ENCODE measurements at regions of chr3 and their contacts with region 1.

Region 1: DNA sequence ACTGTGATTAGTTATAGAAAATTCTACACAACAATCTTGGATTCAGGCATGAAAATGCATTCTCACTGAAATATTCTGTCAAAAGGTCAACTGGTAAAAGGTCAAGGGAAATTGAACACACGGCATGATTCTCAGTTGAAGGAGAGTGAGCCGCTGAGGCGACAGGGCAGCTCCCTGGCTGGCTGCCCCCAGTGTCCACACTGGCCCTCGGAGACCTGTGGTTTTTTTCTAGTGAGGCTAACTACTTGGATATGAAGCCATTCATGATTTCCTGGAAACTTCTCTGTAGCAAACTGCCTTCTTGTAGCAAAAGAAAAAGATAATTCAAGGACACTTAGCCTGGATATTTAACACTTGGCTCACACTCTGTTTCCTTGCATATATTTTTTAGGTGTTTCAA is 37.2 kb downstream of the AADACL2 start:
- DNase-seq: peak; percentile 88
- ATAC-seq: peak; percentile 88
- H3K4me3 ChIP-seq: peak overlapping the region; percentile 36 to 45 (median 45); a peak in 4 of 6 replicates
- H3K27ac ChIP-seq: peak overlapping the region; percentile 100
- H3K4me1 ChIP-seq: peaks cover 72% of the 10 kb centered on the region
- H3K27me3 ChIP-seq: no peaks in the 10 kb centered on the region
- CTCF ChIP-seq: peak; percentile 21; the same call in 1 of the 2 replicates
- EP300 ChIP-seq: peak; percentile 38 to 77; a peak in 3 of 4 replicates
- POLR2A ChIP-seq: peak; percentile 32 to 65; a peak in 3 of 4 replicates
- RAD21 ChIP-seq: peak; percentile 28; the same call in 1 of the 2 replicates

Region 2: DNA sequence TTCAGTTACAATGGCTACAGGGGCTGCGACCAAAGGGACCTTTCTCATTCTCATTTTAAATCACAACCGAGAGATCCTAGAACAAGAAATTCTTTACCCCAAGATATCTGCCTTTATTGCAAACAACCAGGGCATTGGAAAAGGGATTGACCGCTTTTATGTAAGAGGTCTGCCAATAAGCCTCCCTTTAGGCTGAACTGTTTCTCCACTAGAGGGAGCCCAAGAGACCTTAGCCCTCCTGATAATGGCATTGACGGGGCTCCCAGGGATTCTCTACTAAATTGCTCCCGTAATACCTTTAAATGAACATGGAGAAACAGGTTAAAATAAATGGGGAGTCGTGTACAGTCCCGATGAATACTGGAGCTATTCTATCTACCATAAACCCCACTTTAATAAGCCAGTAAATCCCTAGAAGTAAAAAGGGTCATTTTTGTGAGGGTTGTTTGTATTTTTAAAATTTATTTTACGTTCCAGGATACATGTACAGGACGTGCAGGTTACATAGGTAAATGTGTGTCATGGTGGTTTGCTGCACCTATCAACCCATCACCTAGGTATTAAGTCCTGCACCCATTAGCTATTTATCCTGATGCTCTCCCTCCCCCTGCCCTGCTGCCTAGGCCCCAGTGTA is 302.6 kb before region 1 on chr3:
- CTCF ChIA-PET with region 1: no interaction called
- POLR2A ChIA-PET with region 1: no interaction called
- in situ Hi-C with region 1: no loop called
- intact Hi-C with region 1: loop called (anchors 1 kb)
- DNase-seq: peak; percentile 63
- ATAC-seq: peak; percentile 95
- H3K4me3 ChIP-seq: no peak overlapping the region
- H3K27ac ChIP-seq: no peak overlapping the region
- H3K4me1 ChIP-seq: no peaks in the 10 kb centered on the region
- H3K27me3 ChIP-seq: peaks cover 0 to 4% of the 10 kb centered on the region in 2 experiments; a peak in 1 of 5 replicates
- CTCF ChIP-seq: peak; percentile 77
- EP300 ChIP-seq: no peak
- POLR2A ChIP-seq: no peak
- RAD21 ChIP-seq: 0 out of 2 replicates have a peak, but pooled peaks have one; percentile 28

Region 3: DNA sequence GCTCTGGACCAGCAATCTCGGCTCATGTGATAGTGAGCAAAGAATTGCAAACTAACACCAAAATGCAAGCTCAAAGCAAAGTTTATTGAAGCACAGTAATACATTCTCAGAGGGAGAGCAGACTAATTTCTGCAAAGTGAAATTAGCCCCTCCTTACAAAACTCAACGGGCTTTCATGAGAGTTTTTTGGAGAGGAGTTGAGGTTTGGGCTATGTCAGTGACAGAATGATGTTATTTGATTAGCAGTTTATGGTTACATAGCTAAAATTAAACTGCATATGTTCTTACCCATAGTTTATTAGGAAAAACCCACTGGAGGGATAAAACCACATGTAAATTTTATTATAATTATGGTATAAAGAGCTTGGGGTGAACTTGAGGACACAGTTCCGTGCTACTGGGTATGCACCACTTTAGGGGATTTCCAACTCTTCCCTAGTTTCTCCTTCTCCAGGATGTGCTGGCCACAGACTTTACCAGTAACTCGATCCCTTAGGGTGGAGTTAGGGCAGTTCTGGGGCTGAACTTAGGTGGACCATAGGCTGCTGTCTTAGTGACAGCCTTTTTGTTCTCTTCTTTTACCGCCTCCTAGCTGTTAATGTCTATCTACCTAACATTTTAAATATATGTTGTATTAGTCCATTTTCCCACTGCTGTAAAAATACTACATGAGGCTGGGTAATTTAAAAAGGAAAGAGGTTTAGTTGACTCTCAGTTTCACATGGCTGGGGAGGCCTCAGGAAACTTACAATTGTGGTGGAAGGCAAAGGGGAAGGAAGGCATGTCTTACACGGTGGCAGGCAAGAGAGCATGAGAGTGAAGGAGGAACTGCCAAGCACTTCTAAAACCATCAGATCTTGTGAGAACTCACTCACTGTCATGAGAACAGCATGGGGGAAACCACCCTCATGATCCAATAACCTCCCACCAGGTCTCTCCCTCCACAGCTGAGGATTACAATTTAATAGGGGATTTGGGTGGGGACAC is 46.1 kb before region 1 on chr3:
- CTCF ChIA-PET with region 1: no interaction called
- POLR2A ChIA-PET with region 1: no interaction called
- in situ Hi-C with region 1: no loop called
- intact Hi-C with region 1: loop called (anchors 5 kb)
- DNase-seq: no peak
- ATAC-seq: no peak
- H3K4me3 ChIP-seq: no peak overlapping the region
- H3K27ac ChIP-seq: no peak overlapping the region
- H3K4me1 ChIP-seq: peaks cover 11% of the 10 kb centered on the region
- H3K27me3 ChIP-seq: peaks cover 0 to 1% of the 10 kb centered on the region in 2 experiments; a peak in 2 of 5 replicates
- CTCF ChIP-seq: no peak
- EP300 ChIP-seq: no peak
- POLR2A ChIP-seq: no peak
- RAD21 ChIP-seq: no peak

Region 4: GRCh38 chr3:151753846-151754245 is 17.1 kb before region 1 on chr3:
- CTCF ChIA-PET with region 1: no interaction called
- POLR2A ChIA-PET with region 1: no interaction called
- in situ Hi-C with region 1: no loop called
- intact Hi-C with region 1: loop called (anchors 2 kb)
- DNase-seq: no peak
- ATAC-seq: no peak
- H3K4me3 ChIP-seq: no peak overlapping the region
- H3K27ac ChIP-seq: no peak overlapping the region
- H3K4me1 ChIP-seq: no peaks in the 10 kb centered on the region
- H3K27me3 ChIP-seq: no peaks in the 10 kb centered on the region; a peak in 1 of 5 replicates
- CTCF ChIP-seq: no peak
- EP300 ChIP-seq: no peak
- POLR2A ChIP-seq: no peak
- RAD21 ChIP-seq: no peak

Region 5: DNA sequence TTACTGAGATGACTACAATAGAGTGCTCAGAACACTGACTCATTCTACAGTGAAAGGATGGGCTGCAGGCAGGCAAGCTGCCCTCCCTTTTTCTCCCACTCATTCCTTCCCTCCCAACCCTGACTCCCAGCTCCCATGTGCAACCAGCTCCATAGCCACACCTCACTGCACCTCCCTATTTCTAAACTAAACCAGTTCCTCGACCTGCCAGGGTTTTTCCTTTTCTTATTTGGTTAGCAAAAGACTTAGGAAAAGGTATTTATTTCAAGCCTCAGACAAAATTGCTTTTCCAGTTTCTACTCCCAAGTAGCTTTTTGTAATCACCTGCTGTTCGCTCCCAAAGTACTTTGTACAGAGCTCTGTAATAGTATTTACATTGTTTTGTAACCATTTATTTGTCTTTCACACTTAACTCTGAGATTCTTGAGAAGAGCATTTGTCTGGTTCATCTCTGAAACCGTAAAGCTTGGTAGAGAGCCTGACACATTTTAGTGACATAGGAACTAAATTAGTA is 45.2 kb after region 1 on chr3:
- CTCF ChIA-PET with region 1: no interaction called
- POLR2A ChIA-PET with region 1: interaction called, 32 read pairs
- in situ Hi-C with region 1: no loop called
- intact Hi-C with region 1: loop called (anchors 1 kb)
- DNase-seq: peak; percentile 79
- ATAC-seq: peak; percentile 97
- H3K4me3 ChIP-seq: peak overlapping the region in 2 of 3 experiments; percentile 18 to 20; a peak in 2 of 6 replicates
- H3K27ac ChIP-seq: peak overlapping the region; percentile 88
- H3K4me1 ChIP-seq: peaks cover 74% of the 10 kb centered on the region
- H3K27me3 ChIP-seq: no peaks in the 10 kb centered on the region
- CTCF ChIP-seq: no peak
- EP300 ChIP-seq: peak in 1 of 2 experiments; percentile 86; a peak in 2 of 4 replicates
- POLR2A ChIP-seq: no peak
- RAD21 ChIP-seq: no peak